Heart right ventricle (tissue), 16 donors: ENCODE measurements at regions of chr2 and their contacts with region 1.

Region 1: GRCh38 chr2:64943387-64944150 is 45.6 kb upstream of the SLC1A4 start:
- DNase-seq: peak; percentile 38 to 43
- ATAC-seq: peak; percentile 39 to 86 (median 74)
- H3K4me3 ChIP-seq: no peak overlapping the region
- H3K27ac ChIP-seq: no peak overlapping the region
- H3K4me1 ChIP-seq: peaks cover 0 to 43% (median 0%) of the 10 kb centered on the region in 9 donors
- H3K27me3 ChIP-seq: no peaks in the 10 kb centered on the region
- CTCF ChIP-seq: no peak

Region 2: DNA sequence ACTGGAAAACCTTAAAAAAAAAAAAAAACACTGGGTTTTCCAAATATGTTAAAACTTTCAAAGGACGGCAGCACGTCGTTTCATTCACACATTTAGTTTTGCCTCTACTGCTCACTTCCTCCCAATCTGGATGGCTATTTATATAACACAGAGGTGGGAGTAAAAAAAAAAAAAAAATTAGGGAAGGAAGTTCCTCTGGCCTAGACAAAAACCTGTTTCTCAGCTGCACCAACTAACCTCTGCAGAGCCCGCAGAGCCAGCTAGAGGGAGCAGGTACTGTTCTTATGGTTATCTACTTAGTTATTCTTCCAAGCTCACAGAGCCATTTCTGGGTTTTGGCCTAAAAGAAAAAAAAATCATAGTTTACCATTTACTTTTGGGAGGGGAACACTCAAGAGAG is 73.8 kb after region 1 on chr2:
- intact Hi-C with region 1: loop called in 1 of 10 experiments (anchors 5 kb)
- DNase-seq: peak in 1 of 2 donors; percentile 20
- ATAC-seq: peak in 6 of 8 donors; percentile 43 to 85 (median 72)
- H3K4me3 ChIP-seq: peak overlapping the region in 1 of 10 donors; percentile 1
- H3K27ac ChIP-seq: peak overlapping the region in 5 of 10 donors; percentile 23 to 80 (median 58)
- H3K4me1 ChIP-seq: peaks cover 0 to 30% (median 11%) of the 10 kb centered on the region in 9 donors
- H3K27me3 ChIP-seq: no peaks in the 10 kb centered on the region
- CTCF ChIP-seq: peak; percentile 5 to 67 (median 46)